ENCODE measurements at regions of chr6 and their contacts with region 1.

Region 1: GRCh38 chr6:25053875-25054371 is 118.2 kb upstream of the RIPOR2 start:
- DNase-seq: no peak
- H3K4me3 Mint-ChIP-seq: no peak overlapping the region
- H3K27ac Mint-ChIP-seq: peak overlapping the region; percentile 74
- H3K4me1 Mint-ChIP-seq: peaks cover 86% of the 10 kb centered on the region
- H3K27me3 Mint-ChIP-seq: no peaks in the 10 kb centered on the region

Region 2: DNA sequence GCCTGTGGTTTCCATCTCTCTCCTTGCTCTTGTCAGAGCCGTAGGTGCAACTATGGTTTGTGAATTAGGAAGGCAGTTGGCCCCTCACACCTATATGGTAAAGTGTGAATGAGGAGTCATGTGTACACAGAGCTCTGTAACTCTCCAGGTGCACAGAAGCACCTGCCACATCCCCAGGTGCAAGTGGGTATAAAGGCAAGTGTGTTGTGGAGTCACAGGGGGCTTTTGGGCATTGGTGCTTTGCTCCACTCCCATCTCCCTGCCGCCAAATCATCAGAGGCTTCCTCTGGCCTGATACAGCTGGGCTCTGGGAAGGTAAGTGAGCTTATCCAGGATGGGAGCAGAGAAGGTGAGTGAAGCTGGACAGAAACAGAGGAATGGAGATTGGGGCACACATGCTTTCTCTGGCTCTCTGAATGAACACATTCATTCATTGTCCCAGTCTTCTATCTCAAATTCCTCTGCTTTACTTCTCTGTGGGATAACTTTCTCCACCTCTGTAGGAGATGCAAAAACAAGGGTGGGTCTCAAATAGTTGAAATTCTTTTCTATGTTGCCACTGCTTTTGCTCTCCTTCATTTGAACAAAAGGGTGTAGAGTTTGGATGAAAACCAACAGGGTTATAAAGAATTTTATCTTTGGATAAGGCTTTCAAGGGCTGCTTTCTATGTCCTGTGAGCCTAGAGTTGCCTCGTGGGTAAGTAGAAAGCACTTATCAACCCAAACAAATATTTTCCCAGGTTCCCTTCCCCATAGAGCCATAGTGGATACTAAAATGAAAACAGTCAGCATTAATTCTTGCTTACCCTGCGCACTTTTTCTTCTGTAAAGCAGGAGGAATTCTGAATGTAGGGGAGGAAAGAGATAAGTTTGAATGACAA is 73.2 kb before region 1 on chr6:
- CTCF ChIA-PET with region 1: no interaction called
- POLR2A ChIA-PET with region 1: no interaction called
- DNase-seq: no peak
- H3K4me3 Mint-ChIP-seq: no peak overlapping the region
- H3K27ac Mint-ChIP-seq: no peak overlapping the region
- H3K4me1 Mint-ChIP-seq: peaks cover 24% of the 10 kb centered on the region
- H3K27me3 Mint-ChIP-seq: no peaks in the 10 kb centered on the region

Region 3: GRCh38 chr6:25035527-25036435 is 18.1 kb before region 1 on chr6:
- CTCF ChIA-PET with region 1: interaction called, 16 read pairs
- POLR2A ChIA-PET with region 1: interaction called, 96 read pairs
- DNase-seq: peak; percentile 45
- H3K4me3 Mint-ChIP-seq: peak overlapping the region; percentile 95
- H3K27ac Mint-ChIP-seq: peak overlapping the region; percentile 95
- H3K4me1 Mint-ChIP-seq: peaks cover 69% of the 10 kb centered on the region
- H3K27me3 Mint-ChIP-seq: no peaks in the 10 kb centered on the region

Region 4: GRCh38 chr6:25042036-25042521 is 11.8 kb before region 1 on chr6:
- CTCF ChIA-PET with region 1: interaction called, 54 read pairs
- POLR2A ChIA-PET with region 1: interaction called, 96 read pairs
- DNase-seq: peak; percentile 54
- H3K4me3 Mint-ChIP-seq: peak overlapping the region; percentile 92
- H3K27ac Mint-ChIP-seq: peak overlapping the region; percentile 96
- H3K4me1 Mint-ChIP-seq: peaks cover 56% of the 10 kb centered on the region
- H3K27me3 Mint-ChIP-seq: no peaks in the 10 kb centered on the region

Region 5: GRCh38 chr6:25085756-25086155 is 31.8 kb after region 1 on chr6:
- CTCF ChIA-PET with region 1: no interaction called
- POLR2A ChIA-PET with region 1: no interaction called
- DNase-seq: no peak
- H3K4me3 Mint-ChIP-seq: peak overlapping the region; percentile 15
- H3K27ac Mint-ChIP-seq: peak overlapping the region; percentile 51
- H3K4me1 Mint-ChIP-seq: peaks cover 29% of the 10 kb centered on the region
- H3K27me3 Mint-ChIP-seq: no peaks in the 10 kb centered on the region

Measured in activated CD4-positive, alpha-beta memory T cell treated with anti-CD3 and anti-CD28 coated beads, Interleukin-2, amount 10 ng/mL, durations not matched to agents 7 days and 5 days (primary cell).